B cell (primary cell): ENCODE measurements at regions of chr11 and their contacts with region 1.

Region 1: DNA sequence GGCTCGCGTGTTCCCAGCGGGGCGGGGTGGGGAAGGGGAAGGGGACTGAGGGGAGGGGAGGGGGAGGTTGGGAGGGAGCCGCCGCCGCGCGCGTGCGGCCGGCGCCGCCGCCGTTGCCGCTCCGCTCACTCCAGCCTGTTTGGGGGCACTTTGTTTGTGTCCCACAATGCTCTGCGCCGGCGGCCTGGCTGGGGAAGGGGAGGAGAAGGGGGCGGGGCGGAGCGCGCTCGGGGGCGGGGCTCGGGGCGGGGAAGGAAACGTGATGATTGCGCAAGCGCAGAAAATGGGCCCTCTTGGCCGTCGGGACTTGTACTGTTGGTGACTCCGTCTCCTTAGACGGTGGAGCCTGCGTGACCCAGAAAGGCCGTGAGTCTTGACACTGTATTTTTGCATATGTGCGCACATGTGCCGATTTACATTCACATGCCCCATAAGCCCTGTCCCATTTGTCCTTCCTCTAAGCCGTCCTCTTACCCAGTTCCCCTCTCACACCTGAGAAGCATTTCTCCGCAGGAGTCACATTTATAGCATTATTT is at the start of gene ZBTB44:
- DNase-seq: peak; percentile 94
- ATAC-seq: peak; percentile 76
- H3K4me3 ChIP-seq: peak within 1 kb of the TSS; percentile 59 to 77 (median 72)
- H3K4me3 Mint-ChIP-seq: peak within 1 kb of the TSS; percentile 97
- H3K27ac ChIP-seq: peak within 1 kb of the TSS; percentile 81 to 91
- H3K27ac Mint-ChIP-seq: peak within 1 kb of the TSS; percentile 98
- H3K4me1 ChIP-seq: peaks cover 14 to 24% of the 10 kb centered on the region in 2 donors
- H3K4me1 Mint-ChIP-seq: peaks cover 43% of the 10 kb centered on the region
- H3K27me3 ChIP-seq: no peaks in the 10 kb centered on the region
- H3K27me3 Mint-ChIP-seq: no peaks in the 10 kb centered on the region
- CTCF ChIP-seq: no peak
- total RNA-seq, gene ZBTB44: 89.4 and 102 TPM in 2 replicates

Region 2: DNA sequence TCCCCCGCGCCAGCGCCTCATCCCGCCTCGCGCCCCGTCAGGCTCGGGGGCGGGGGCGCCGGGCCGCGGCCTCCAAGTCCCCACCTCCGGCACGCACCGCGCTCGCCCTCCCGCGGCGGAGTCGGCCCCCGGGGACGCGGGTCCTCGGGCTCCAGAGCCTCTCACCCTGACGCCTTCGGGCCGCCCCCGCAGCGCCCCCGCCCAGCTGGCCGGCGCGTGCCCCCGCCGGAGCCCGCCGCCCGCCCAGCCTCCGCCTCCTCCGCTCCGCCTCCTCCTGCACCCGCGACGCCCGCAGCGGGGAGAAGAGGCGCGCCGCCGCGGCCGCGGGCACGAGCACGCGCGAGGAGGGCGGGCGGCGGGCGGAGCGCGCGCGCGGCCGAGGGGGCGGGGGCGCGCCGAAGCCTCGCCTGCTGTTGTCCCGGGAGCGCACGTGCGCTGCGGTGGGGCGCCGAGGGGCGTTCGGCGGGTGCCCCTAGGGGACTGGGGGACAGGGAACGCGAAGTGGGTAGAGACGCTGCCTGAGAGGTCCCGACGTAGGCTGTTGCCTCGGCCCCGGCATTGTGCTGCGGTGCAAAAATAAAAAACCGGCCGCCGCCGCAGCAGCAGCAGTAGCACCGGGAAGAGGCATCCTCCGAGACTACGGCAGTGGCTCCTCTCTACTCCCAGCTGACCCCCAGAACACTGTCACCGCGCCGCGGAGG is 1035.3 kb before region 1 on chr11:
- CTCF ChIA-PET with region 1: no interaction called
- POLR2A ChIA-PET with region 1: no interaction called
- intact Hi-C with region 1: loop called (anchors 5 kb)
- DNase-seq: peak; percentile 87
- ATAC-seq: peak; percentile 83
- H3K4me3 ChIP-seq: peak overlapping the region; percentile 46 to 63 (median 54)
- H3K4me3 Mint-ChIP-seq: peak overlapping the region; percentile 78
- H3K27ac ChIP-seq: peak overlapping the region in 1 of 2 donors; percentile 36
- H3K27ac Mint-ChIP-seq: peak overlapping the region; percentile 44
- H3K4me1 ChIP-seq: peaks cover 19 to 29% of the 10 kb centered on the region in 2 donors
- H3K4me1 Mint-ChIP-seq: peaks cover 29% of the 10 kb centered on the region
- H3K27me3 ChIP-seq: no peaks in the 10 kb centered on the region
- H3K27me3 Mint-ChIP-seq: peaks cover 37% of the 10 kb centered on the region
- CTCF ChIP-seq: no peak

Region 3: GRCh38 chr11:129895126-129896041 is 419.4 kb before region 1 on chr11 and contains the start of gene NFRKB:
- CTCF ChIA-PET with region 1: no interaction called
- POLR2A ChIA-PET with region 1: no interaction called
- intact Hi-C with region 1: loop called (anchors 1 kb)
- DNase-seq: peak; percentile 86
- ATAC-seq: peak; percentile 97
- H3K4me3 ChIP-seq: peak within 1 kb of the TSS; percentile 71 to 92 (median 79)
- H3K4me3 Mint-ChIP-seq: peak within 1 kb of the TSS; percentile 92
- H3K27ac ChIP-seq: peak within 1 kb of the TSS; percentile 35 to 53
- H3K27ac Mint-ChIP-seq: peak within 1 kb of the TSS; percentile 82
- H3K4me1 ChIP-seq: peaks cover 10 to 14% of the 10 kb centered on the region in 2 donors
- H3K4me1 Mint-ChIP-seq: peaks cover 22% of the 10 kb centered on the region
- H3K27me3 ChIP-seq: no peaks in the 10 kb centered on the region
- H3K27me3 Mint-ChIP-seq: no peaks in the 10 kb centered on the region
- CTCF ChIP-seq: no peak
- total RNA-seq, gene NFRKB: 36.9 and 40.4 TPM in 2 replicates

Region 4: GRCh38 chr11:130069684-130070108 is 245.1 kb before region 1 on chr11 and contains the start of gene APLP2:
- CTCF ChIA-PET with region 1: no interaction called
- POLR2A ChIA-PET with region 1: no interaction called
- intact Hi-C with region 1: loop called (anchors 1 kb)
- DNase-seq: peak; percentile 98
- ATAC-seq: peak; percentile 94
- H3K4me3 ChIP-seq: peak within 1 kb of the TSS; percentile 64 to 90 (median 81)
- H3K4me3 Mint-ChIP-seq: peak within 1 kb of the TSS; percentile 98
- H3K27ac ChIP-seq: peak within 1 kb of the TSS; percentile 58 to 73
- H3K27ac Mint-ChIP-seq: peak within 1 kb of the TSS; percentile 96
- H3K4me1 ChIP-seq: peaks cover 22 to 25% of the 10 kb centered on the region in 2 donors
- H3K4me1 Mint-ChIP-seq: peaks cover 36% of the 10 kb centered on the region
- H3K27me3 ChIP-seq: peaks cover 0 to 3% (median 0%) of the 10 kb centered on the region in 4 experiments
- H3K27me3 Mint-ChIP-seq: peaks cover 10% of the 10 kb centered on the region
- CTCF ChIP-seq: no peak
- total RNA-seq, gene APLP2: 102 and 111 TPM in 2 replicates

Region 5: GRCh38 chr11:130166457-130166784 is 148.4 kb before region 1 on chr11:
- CTCF ChIA-PET with region 1: no interaction called
- POLR2A ChIA-PET with region 1: interaction called, 3 read pairs
- intact Hi-C with region 1: loop called (anchors 10 kb)
- DNase-seq: peak; percentile 83
- ATAC-seq: peak; percentile 83
- H3K4me3 ChIP-seq: no peak overlapping the region
- H3K4me3 Mint-ChIP-seq: peak overlapping the region; percentile 82
- H3K27ac ChIP-seq: peak overlapping the region; percentile 54 to 77
- H3K27ac Mint-ChIP-seq: peak overlapping the region; percentile 95
- H3K4me1 ChIP-seq: peaks cover 41 to 73% of the 10 kb centered on the region in 2 donors
- H3K4me1 Mint-ChIP-seq: peaks cover 86% of the 10 kb centered on the region
- H3K27me3 ChIP-seq: no peaks in the 10 kb centered on the region
- H3K27me3 Mint-ChIP-seq: no peaks in the 10 kb centered on the region
- CTCF ChIP-seq: no peak

Region 6: GRCh38 chr11:130300567-130300966 is 14.3 kb before region 1 on chr11:
- CTCF ChIA-PET with region 1: no interaction called
- POLR2A ChIA-PET with region 1: no interaction called
- intact Hi-C with region 1: no loop called
- DNase-seq: no peak
- ATAC-seq: no peak
- H3K4me3 ChIP-seq: no peak overlapping the region
- H3K4me3 Mint-ChIP-seq: peak overlapping the region; percentile 33
- H3K27ac ChIP-seq: no peak overlapping the region
- H3K27ac Mint-ChIP-seq: peak overlapping the region; percentile 39
- H3K4me1 ChIP-seq: peaks cover 10 to 20% of the 10 kb centered on the region in 2 donors
- H3K4me1 Mint-ChIP-seq: peaks cover 49% of the 10 kb centered on the region
- H3K27me3 ChIP-seq: no peaks in the 10 kb centered on the region
- H3K27me3 Mint-ChIP-seq: no peaks in the 10 kb centered on the region
- CTCF ChIP-seq: no peak

Region 7: DNA sequence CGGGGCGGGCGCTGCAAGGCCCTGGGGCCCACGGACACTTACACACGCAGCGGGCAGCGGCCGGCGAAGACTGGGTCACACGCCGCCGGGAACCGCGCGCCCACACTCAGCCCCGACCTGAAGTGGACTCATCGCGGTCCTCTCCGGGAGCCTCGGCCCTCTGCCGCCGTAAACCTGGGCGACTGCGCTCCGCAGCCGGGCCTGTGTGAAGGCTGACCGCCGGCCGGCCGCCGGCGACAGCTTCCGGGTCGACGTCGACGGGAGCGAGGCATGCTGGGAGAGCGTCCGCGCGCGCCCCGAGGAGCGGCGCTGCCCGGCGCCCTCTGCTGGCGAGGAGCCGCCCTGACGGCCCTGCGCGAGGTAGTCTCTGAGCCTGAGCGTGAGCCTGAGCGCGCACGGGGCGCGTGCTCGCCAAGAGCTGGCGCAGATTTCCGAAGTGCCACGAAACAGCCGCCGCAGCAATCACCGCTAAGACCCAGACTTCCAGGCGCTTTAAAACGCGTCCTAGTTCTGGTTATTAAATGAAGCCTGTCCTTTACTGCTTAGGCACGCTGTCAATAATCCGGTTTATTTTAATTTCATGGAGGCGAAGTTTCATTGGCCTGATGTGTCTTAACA is 601.5 kb after region 1 on chr11 and contains the start of gene SNX19:
- CTCF ChIA-PET with region 1: no interaction called
- POLR2A ChIA-PET with region 1: no interaction called
- intact Hi-C with region 1: loop called (anchors 1 kb)
- DNase-seq: peak; percentile 94
- ATAC-seq: peak; percentile 99
- H3K4me3 ChIP-seq: peak within 1 kb of the TSS; percentile 70 to 97 (median 85)
- H3K4me3 Mint-ChIP-seq: peak within 1 kb of the TSS; percentile 91
- H3K27ac ChIP-seq: peak within 1 kb of the TSS; percentile 73 to 91
- H3K27ac Mint-ChIP-seq: peak within 1 kb of the TSS; percentile 90
- H3K4me1 ChIP-seq: peaks cover 12 to 24% of the 10 kb centered on the region in 2 donors
- H3K4me1 Mint-ChIP-seq: peaks cover 41% of the 10 kb centered on the region
- H3K27me3 ChIP-seq: peaks cover 0 to 9% (median 0%) of the 10 kb centered on the region in 4 experiments
- H3K27me3 Mint-ChIP-seq: peaks cover 21% of the 10 kb centered on the region
- CTCF ChIP-seq: peak; percentile 97
- total RNA-seq, gene SNX19: 74.0 and 76.0 TPM in 2 replicates